CD8-positive, alpha-beta T cell (primary cell): ENCODE measurements at regions of chr10 and their contacts with region 1.

Region 1: DNA sequence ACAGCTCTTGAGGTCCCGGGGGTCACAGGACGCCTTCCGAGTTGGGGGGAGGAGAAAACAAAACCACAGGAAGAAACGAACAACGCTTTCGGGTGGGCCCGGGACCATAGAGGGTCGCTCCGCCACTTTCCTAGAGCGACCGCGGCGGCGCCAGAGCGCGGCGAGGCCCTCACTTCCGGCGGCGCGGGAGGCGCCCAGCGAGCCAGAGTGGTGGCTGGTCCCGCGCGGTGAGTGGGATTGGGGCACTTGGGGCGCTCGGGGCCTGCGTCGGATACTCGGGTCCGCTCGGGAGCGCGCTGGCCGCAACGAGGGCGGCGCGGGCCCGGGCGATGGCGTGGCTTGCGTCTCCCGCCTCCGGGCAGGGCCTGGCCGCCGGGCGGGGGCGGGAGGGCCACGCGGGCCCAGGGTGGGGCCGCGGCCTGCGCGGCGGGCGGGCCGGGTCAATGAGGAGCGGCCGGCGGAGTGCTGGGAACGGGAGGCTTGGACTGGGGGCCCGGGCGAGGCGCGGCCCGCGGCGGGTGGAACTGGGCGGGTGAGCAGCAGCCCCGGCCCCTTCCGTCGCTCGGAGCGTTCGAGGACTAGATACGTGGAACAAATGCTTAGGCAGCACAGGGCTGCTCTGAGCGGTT is at the start of gene ZNF22:
- DNase-seq: peak; percentile 50 to 89 (median 76)
- ATAC-seq: peak; percentile 79
- H3K4me3 ChIP-seq: peak within 1 kb of the TSS; percentile 60 to 65
- H3K4me3 Mint-ChIP-seq: peak within 1 kb of the TSS; percentile 89
- H3K27ac ChIP-seq: peak within 1 kb of the TSS; percentile 65 to 78
- H3K27ac Mint-ChIP-seq: peak within 1 kb of the TSS; percentile 98
- H3K4me1 ChIP-seq: peaks cover 32% of the 10 kb centered on the region
- H3K4me1 Mint-ChIP-seq: peaks cover 45% of the 10 kb centered on the region
- H3K27me3 ChIP-seq: no peaks in the 10 kb centered on the region
- H3K27me3 Mint-ChIP-seq: no peaks in the 10 kb centered on the region
- CTCF ChIP-seq: no peak
- total RNA-seq, gene ZNF22: 26.5 to 29.6 TPM

Region 2: GRCh38 chr10:43574001-43574892 is 1426.6 kb before region 1 on chr10 and contains the start of gene ZNF239:
- CTCF ChIA-PET with region 1: no interaction called
- POLR2A ChIA-PET with region 1: no interaction called
- intact Hi-C with region 1: loop called in 1 of 2 experiments (anchors 5 kb)
- DNase-seq: peak; percentile 62 to 93 (median 82)
- ATAC-seq: peak; percentile 88
- H3K4me3 ChIP-seq: peak within 1 kb of the TSS; percentile 43 to 63
- H3K4me3 Mint-ChIP-seq: peak within 1 kb of the TSS; percentile 85
- H3K27ac ChIP-seq: peak within 1 kb of the TSS; percentile 38 to 66
- H3K27ac Mint-ChIP-seq: peak within 1 kb of the TSS; percentile 90
- H3K4me1 ChIP-seq: peaks cover 25% of the 10 kb centered on the region
- H3K4me1 Mint-ChIP-seq: peaks cover 51% of the 10 kb centered on the region
- H3K27me3 ChIP-seq: no peaks in the 10 kb centered on the region
- H3K27me3 Mint-ChIP-seq: no peaks in the 10 kb centered on the region
- CTCF ChIP-seq: no peak
- total RNA-seq, gene ZNF239: 0.75 to 1.1 TPM

Region 3: DNA sequence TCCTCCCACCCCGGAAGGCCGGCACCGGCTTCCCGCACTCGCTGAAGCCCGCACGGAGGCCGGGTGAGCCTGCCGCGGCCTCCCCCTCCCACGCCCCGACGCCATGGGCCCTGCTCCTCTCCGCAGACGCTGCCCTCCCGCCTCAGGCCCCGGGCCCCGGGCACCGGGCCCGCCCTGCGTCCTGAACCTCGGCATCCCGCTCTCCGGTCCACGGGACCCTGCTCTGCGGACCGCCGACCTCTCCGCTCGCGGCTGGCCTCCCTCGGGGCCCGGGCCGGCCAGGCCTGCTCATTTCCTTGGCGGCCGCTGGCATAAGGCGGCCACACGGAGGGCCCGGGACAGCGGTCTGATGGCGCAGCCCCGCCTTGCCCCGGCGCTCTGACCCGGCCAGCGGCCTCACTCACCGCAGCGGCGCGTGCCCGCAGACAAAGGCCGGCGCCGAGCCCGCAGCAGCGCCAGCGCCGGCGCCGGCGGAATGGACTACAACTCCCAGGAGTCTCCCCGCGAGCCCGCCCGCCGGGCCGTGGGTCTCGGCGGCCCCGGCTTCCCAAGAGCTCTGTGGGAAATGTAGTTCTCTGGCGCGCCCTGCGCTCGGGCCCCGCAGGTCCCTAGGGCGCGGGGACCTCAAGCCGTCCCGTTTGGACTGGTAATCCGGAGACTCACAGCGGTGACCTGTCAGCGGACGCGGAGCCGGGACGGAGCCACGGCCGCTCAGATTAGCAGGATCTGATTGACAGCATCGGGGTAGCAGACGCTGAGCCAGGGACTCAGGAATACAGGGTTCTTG is 1352.3 kb before region 1 on chr10 and contains the start of gene ZNF32:
- CTCF ChIA-PET with region 1: no interaction called
- POLR2A ChIA-PET with region 1: interaction called, 3 read pairs
- intact Hi-C with region 1: loop called in 1 of 2 experiments (anchors 2 kb)
- DNase-seq: peak; percentile 60 to 89 (median 79)
- ATAC-seq: peak; percentile 97
- H3K4me3 ChIP-seq: peak within 1 kb of the TSS; percentile 74 to 92
- H3K4me3 Mint-ChIP-seq: peak within 1 kb of the TSS; percentile 97
- H3K27ac ChIP-seq: peak within 1 kb of the TSS; percentile 48 to 80
- H3K27ac Mint-ChIP-seq: peak within 1 kb of the TSS; percentile 92
- H3K4me1 ChIP-seq: peaks cover 14% of the 10 kb centered on the region
- H3K4me1 Mint-ChIP-seq: peaks cover 23% of the 10 kb centered on the region
- H3K27me3 ChIP-seq: no peaks in the 10 kb centered on the region
- H3K27me3 Mint-ChIP-seq: peaks cover 1% of the 10 kb centered on the region
- CTCF ChIP-seq: no peak
- total RNA-seq, gene ZNF32: 17.4 to 18.9 TPM

Region 4: GRCh38 chr10:44959247-44960087 is 41.4 kb before region 1 on chr10 and contains the start of gene RASSF4:
- CTCF ChIA-PET with region 1: no interaction called
- POLR2A ChIA-PET with region 1: interaction called, 4 read pairs
- intact Hi-C with region 1: loop called (anchors 1 to 2 kb)
- DNase-seq: peak; percentile 84 to 95 (median 92)
- ATAC-seq: peak; percentile 99
- H3K4me3 ChIP-seq: peak within 1 kb of the TSS; percentile 79 to 81
- H3K4me3 Mint-ChIP-seq: peak within 1 kb of the TSS; percentile 88
- H3K27ac ChIP-seq: peak within 1 kb of the TSS; percentile 49 to 67
- H3K27ac Mint-ChIP-seq: peak within 1 kb of the TSS; percentile 57
- H3K4me1 ChIP-seq: peaks cover 19% of the 10 kb centered on the region
- H3K4me1 Mint-ChIP-seq: peaks cover 32% of the 10 kb centered on the region
- H3K27me3 ChIP-seq: no peaks in the 10 kb centered on the region
- H3K27me3 Mint-ChIP-seq: no peaks in the 10 kb centered on the region
- CTCF ChIP-seq: no peak
- total RNA-seq, gene RASSF4: 0.30 to 0.31 TPM

Region 5: GRCh38 chr10:44974628-44975431 is 26.0 kb before region 1 on chr10:
- CTCF ChIA-PET with region 1: no interaction called
- POLR2A ChIA-PET with region 1: interaction called, 3 read pairs
- intact Hi-C with region 1: loop called in 1 of 2 experiments (anchors 1 kb)
- DNase-seq: peak; percentile 36 to 83 (median 56)
- ATAC-seq: peak; percentile 98
- H3K4me3 ChIP-seq: peak overlapping the region; percentile 44 to 48
- H3K4me3 Mint-ChIP-seq: peak overlapping the region; percentile 70
- H3K27ac ChIP-seq: peak overlapping the region in 1 of 2 experiments; percentile 44
- H3K27ac Mint-ChIP-seq: peak overlapping the region; percentile 27
- H3K4me1 ChIP-seq: peaks cover 20% of the 10 kb centered on the region
- H3K4me1 Mint-ChIP-seq: peaks cover 8% of the 10 kb centered on the region
- H3K27me3 ChIP-seq: no peaks in the 10 kb centered on the region
- H3K27me3 Mint-ChIP-seq: no peaks in the 10 kb centered on the region
- CTCF ChIP-seq: peak; percentile 90

Region 6: GRCh38 chr10:46022978-46023702 is 1022.3 kb after region 1 on chr10:
- CTCF ChIA-PET with region 1: no interaction called
- POLR2A ChIA-PET with region 1: no interaction called
- intact Hi-C with region 1: loop called in 1 of 2 experiments (anchors 2 kb)
- DNase-seq: peak; percentile 51 to 90 (median 81)
- ATAC-seq: peak; percentile 97
- H3K4me3 ChIP-seq: peak overlapping the region; percentile 64 to 70
- H3K4me3 Mint-ChIP-seq: peak overlapping the region; percentile 85
- H3K27ac ChIP-seq: peak overlapping the region; percentile 31 to 34
- H3K27ac Mint-ChIP-seq: peak overlapping the region; percentile 89
- H3K4me1 ChIP-seq: peaks cover 78% of the 10 kb centered on the region
- H3K4me1 Mint-ChIP-seq: peaks cover 88% of the 10 kb centered on the region
- H3K27me3 ChIP-seq: no peaks in the 10 kb centered on the region
- H3K27me3 Mint-ChIP-seq: no peaks in the 10 kb centered on the region
- CTCF ChIP-seq: no peak

Region 7: GRCh38 chr10:46030091-46030937 is 1029.4 kb after region 1 on chr10 and contains the start of gene NCOA4:
- CTCF ChIA-PET with region 1: no interaction called
- POLR2A ChIA-PET with region 1: no interaction called
- intact Hi-C with region 1: loop called (anchors 2 to 5 kb)
- DNase-seq: peak; percentile 87 to 99 (median 96)
- ATAC-seq: peak; percentile 97
- H3K4me3 ChIP-seq: peak within 1 kb of the TSS; percentile 86 to 97
- H3K4me3 Mint-ChIP-seq: peak within 1 kb of the TSS; percentile 99
- H3K27ac ChIP-seq: peak within 1 kb of the TSS; percentile 84 to 98
- H3K27ac Mint-ChIP-seq: peak within 1 kb of the TSS; percentile 95
- H3K4me1 ChIP-seq: peaks cover 48% of the 10 kb centered on the region
- H3K4me1 Mint-ChIP-seq: peaks cover 49% of the 10 kb centered on the region
- H3K27me3 ChIP-seq: no peaks in the 10 kb centered on the region
- H3K27me3 Mint-ChIP-seq: no peaks in the 10 kb centered on the region
- CTCF ChIP-seq: peak; percentile 69
- total RNA-seq, gene NCOA4: 47.4 to 51.5 TPM